ENCODE measurements at regions of chr4 and their contacts with region 1.

Region 1: GRCh38 chr4:1547856-1548826 is 136.0 kb downstream of the FAM53A start:
- DNase-seq: no peak
- ATAC-seq: no peak
- H3K4me3 ChIP-seq: no peak overlapping the region
- H3K27ac ChIP-seq: no peak overlapping the region
- H3K4me1 ChIP-seq: peaks cover 6% of the 10 kb centered on the region; the same call in 1 of the 3 replicates
- CTCF ChIP-seq: no peak
- EP300 ChIP-seq: no peak
- POLR2A ChIP-seq: no peak
- RAD21 ChIP-seq: no peak

Region 2: GRCh38 chr4:1533401-1534064 is 14.6 kb before region 1 on chr4:
- CTCF ChIA-PET with region 1: interaction called, 34 read pairs
- POLR2A ChIA-PET with region 1: no interaction called
- DNase-seq: no peak
- ATAC-seq: no peak
- H3K4me3 ChIP-seq: no peak overlapping the region
- H3K27ac ChIP-seq: no peak overlapping the region
- H3K4me1 ChIP-seq: no peaks in the 10 kb centered on the region
- CTCF ChIP-seq: no peak
- EP300 ChIP-seq: no peak
- POLR2A ChIP-seq: no peak
- RAD21 ChIP-seq: no peak

Region 3: DNA sequence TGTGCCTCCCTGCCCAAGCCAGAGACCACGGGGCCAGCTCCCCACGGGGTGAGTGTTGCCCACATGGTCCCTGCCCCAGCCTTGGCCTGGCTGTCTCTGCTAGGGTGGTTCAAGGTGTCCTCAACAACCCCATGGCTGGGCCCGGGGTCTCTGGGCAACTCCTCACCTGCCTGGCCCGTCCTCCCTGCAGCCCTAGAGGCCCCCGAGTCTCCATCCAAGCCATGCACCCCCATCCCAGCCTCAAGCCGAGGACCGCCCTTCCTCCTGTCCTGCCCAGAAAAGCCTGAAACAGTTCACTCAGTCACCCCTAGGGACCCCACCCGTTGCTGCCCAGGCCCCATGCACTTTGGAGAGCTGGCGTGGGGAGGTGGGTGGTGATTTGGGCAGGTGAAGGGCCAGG is 15.1 kb after region 1 on chr4:
- CTCF ChIA-PET with region 1: interaction called, 15 read pairs
- POLR2A ChIA-PET with region 1: no interaction called
- DNase-seq: no peak
- ATAC-seq: no peak
- H3K4me3 ChIP-seq: no peak overlapping the region
- H3K27ac ChIP-seq: no peak overlapping the region
- H3K4me1 ChIP-seq: peaks cover 4% of the 10 kb centered on the region; the same call in 1 of the 3 replicates
- CTCF ChIP-seq: no peak
- EP300 ChIP-seq: no peak
- POLR2A ChIP-seq: no peak
- RAD21 ChIP-seq: no peak

Measured in A549 (cell line).